ENCODE measurements at regions of chr5 and their contacts with region 1.

Region 1: DNA sequence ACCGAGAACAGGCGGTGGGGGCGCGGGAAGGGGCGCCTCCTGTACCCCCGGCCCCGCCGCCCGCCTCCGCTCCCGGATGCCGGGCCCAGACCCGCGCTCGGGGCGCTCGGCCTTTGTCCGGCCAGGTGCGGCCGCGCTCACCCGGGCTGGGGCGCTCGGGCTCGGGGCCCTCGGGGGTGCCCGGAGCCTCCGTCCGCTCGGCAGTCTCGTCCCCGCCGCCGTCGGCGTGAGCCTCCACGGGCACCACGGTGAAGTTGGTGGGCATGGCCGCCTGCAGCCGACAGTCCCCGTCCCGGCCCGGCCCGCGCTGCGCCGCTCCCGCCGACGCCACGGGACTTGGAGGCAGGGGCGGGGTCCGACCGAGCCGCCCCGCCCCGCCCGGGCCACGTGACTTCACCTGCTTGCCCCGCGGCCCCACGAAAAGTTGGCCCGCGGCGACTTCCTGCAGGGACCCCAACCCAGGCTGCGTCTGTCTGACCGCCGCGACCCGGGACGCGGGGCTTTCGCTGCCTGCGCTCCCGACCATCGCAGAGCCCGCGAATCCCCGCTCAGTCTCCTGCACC is at the start of gene SLC12A7:
- DNase-seq: peak; percentile 77
- ATAC-seq: peak; percentile 60
- H3K4me3 ChIP-seq: peak within 1 kb of the TSS; percentile 89
- H3K27ac ChIP-seq: peak within 1 kb of the TSS; percentile 86
- H3K4me1 ChIP-seq: peaks cover 26% of the 10 kb centered on the region
- H3K27me3 ChIP-seq: no peaks in the 10 kb centered on the region
- CTCF ChIP-seq: no peak
- total RNA-seq, gene SLC12A7: 48.2 and 58.3 TPM in 2 replicates

Region 2: DNA sequence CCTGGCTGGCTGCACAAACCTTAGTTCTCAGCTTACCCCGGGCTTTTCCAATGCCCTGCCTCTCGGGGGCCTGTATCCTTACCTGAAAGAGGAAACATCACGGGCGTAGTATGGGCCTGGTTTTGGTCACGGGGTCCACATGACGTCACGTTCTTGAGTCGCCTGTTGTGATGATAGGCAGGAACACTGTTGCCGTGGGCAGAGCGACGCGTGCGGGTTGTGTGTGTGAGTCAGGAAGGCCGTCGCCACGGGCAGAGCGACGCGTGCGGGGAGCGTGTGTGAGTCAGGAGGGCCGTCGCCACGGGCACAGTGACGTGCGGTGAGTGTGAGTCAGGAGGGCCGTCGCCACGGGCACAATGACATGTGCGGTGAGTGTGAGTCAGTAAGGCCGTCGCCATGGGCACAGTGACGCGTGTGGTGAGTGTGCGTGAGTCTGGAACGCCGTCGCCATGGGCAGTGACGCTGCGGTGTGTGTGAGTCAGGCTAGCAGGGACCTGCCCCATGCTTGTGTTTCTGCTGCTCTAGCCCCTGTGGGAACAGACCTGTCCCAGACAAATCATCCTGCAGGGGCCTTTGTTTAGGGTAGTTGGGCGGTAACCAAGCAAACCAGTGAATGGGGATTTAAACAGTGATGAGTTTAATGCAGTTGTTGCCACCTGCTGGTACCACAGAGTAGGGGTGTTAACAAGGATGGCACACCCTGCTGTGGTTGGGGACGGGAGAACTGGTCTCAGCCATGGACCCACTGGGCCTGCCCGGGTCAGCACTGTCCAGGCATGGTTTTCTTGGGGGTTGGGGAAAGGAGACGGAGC is 199.3 kb before region 1 on chr5:
- CTCF ChIA-PET with region 1: no interaction called
- POLR2A ChIA-PET with region 1: no interaction called
- intact Hi-C with region 1: loop called (anchors 5 kb)
- DNase-seq: peak; percentile 99
- ATAC-seq: peak; percentile 93
- H3K4me3 ChIP-seq: peak overlapping the region; percentile 8; the same call in 1 of the 2 replicates
- H3K27ac ChIP-seq: peak overlapping the region; percentile 97
- H3K4me1 ChIP-seq: peaks cover 33% of the 10 kb centered on the region
- H3K27me3 ChIP-seq: no peaks in the 10 kb centered on the region
- CTCF ChIP-seq: peak; percentile 78

Region 3: DNA sequence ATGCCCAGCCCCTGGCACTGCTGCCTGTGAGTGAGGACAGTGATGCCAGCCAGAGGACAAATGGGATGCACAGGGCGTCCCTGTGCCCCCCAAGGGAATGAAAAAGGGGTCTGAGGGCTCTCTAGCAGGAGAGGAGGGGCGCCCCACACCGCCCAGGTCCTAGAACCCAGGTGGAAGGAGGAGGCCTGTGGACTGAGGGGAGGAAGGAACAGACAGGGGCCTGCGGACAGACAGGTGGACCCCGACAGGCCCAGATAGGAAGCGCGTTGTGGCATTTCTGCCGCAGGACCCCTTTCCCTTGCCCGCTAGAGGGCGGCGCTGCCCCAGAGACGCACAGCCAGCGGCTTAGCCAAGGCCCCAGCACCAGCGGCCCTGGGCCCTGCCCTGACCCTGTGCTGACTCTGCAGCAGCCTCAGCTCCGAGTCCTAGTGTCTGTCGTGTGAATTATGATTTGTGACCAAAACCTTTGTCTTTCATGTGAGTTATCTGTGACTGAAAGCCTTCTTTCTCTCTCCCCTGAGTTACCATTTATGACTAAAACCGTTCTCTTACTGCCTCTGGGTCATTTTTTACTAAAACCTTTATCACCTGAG is 188.4 kb before region 1 on chr5:
- CTCF ChIA-PET with region 1: no interaction called
- POLR2A ChIA-PET with region 1: no interaction called
- intact Hi-C with region 1: no loop called
- DNase-seq: peak; percentile 72
- ATAC-seq: peak; percentile 95
- H3K4me3 ChIP-seq: no peak overlapping the region
- H3K27ac ChIP-seq: no peak overlapping the region
- H3K4me1 ChIP-seq: no peaks in the 10 kb centered on the region
- H3K27me3 ChIP-seq: no peaks in the 10 kb centered on the region
- CTCF ChIP-seq: peak; percentile 85